Sciatic nerve (tissue), 2 donors: ENCODE measurements at regions of chr3 and their contacts with region 1.

Region 1: DNA sequence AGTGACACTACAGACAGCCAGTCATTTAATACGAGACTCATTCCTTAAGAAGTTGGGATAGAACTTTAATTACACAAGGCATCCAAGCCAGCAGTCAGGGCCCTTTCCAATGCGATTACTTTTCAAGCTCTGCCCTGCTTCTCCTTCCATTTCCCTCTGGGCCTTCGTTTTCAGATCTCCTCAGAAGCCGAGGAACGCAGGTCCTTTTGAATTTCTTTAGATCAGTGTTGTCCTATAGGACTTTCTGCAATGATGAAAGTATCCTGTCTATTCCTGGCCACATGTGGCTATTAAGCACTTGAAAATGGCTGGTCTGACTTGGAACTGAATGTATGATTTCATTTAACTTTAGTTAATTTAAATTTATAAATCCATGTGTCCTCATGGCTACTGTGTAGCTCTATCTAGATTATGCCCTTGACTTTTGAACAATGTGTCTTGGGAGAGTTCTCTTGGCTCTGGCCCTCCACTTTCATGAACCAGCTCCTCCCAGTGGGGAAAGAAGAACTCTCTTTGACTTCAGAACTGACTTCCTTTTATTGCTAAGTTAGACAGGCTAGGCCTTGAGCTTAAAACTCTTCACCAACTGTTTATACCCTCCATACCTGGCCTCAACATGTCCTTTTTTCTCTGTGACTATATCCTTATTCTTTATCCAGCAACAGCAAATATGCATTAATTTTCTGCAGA is 22.6 kb downstream of the TGFBR2 start:
- DNase-seq: no peak
- ATAC-seq: peak; percentile 46

Region 2: GRCh38 chr3:29822071-29822470 is 807.0 kb before region 1 on chr3:
- intact Hi-C with region 1: no loop called
- DNase-seq: no peak
- ATAC-seq: no peak

Region 3: DNA sequence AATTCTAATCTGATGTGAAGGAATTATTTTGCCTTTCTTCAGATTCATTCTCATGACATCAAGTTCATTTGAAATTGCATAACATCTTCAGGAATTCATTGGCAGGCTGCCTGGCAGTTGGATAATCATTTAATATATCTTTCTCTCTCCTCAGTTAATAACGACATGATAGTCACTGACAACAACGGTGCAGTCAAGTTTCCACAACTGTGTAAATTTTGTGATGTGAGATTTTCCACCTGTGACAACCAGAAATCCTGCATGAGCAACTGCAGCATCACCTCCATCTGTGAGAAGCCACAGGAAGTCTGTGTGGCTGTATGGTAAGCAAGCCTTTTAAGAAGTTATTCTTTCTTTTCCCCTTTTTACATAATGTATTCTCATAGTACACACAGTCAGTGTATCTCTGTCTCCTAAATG is 15.6 kb after region 1 on chr3:
- intact Hi-C with region 1: loop called (anchors 2 kb)
- DNase-seq: peak; percentile 82
- ATAC-seq: peak; percentile 73

Region 4: DNA sequence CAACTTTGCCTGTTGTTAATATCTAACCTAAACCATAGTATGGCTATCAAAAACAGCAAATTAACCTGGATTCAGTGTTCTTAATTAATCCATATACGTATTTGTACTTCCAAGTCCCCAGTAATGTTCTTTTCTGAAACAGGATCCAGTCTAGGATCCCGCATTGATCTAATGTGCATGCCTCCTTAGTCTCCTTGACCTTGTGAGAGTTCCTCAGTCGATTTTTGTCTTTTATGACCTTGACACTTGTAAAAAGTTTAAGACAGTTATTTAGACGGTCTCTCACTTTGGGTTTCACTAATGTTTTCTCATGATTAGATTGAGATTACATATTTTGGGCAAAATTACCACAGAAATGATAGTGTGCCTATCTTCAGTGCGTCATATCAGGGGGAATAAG is 46.7 kb after region 1 on chr3:
- intact Hi-C with region 1: loop called (anchors 1 kb)
- DNase-seq: no peak
- ATAC-seq: no peak